Posterior vena cava (tissue), 2 donors: ENCODE measurements at regions of chr5 and their contacts with region 1.

Region 1: DNA sequence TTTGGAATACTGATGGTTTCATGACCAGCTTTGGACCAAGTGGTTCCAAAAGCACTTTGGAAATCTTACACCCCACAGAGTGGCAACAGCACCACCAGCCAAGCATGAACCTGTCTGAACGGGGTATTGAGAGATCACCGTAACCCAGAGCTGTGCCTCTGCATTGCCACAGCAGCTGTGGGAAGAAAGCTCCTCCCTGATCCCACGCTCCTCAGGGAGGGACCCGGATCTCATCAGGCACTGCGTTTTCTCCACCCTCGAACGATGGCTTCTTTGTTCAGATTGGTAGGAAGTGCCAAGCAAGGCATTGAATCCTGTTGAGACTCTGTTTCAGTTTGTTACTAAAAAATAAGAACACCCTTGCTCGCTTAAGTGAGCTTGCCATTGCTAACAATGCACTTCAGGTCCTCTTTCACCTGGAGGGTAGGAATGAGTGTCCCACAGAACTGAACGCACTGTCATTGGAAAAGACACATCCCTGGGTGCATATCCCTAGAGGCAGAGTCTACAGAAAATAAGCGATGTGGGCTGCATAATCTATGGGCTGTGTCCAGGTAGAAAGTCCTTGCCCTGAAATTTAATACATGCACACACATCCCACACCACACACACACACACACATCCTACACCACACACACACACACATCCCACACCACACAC is 118.0 kb upstream of the ICE1 start:
- DNase-seq: no peak

Region 2: DNA sequence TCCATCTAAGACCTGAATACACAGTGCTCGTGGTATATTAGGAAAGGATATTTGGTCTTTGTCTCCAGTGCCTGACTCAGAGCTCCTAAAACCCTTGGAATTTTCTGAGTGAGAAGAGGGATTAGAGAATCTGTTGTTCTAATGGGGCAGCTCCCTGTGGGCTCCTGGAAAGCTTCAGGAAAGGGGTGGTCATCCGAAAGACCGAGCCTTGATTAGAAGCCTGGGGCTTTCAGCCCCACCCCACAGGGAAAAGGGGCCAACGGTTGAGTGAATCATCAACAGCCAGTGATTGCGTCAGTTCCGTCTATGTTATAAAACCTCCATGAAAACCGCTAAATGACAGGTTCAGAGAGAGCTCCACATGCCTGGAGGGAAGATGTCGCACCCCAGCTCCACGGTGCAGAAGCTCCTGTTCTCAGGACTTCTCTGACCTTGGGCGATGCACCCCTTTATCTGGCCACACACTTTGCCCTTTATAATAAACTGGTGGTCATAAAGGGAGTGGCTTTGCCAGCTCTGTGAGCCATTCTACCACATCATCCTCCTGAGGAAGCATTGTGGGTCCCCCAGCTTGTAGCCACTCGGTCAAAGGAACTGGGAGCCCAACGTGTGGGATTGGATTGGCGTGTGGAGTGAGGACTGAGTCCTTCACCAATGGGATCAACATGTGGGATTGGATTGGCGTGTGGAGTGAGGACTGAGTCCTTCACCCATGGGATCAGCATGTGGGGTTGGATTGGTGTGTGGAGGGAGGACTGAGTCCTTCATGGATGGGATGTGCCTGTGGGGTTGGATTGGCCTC is 47.0 kb after region 1 on chr5:
- intact Hi-C with region 1: loop called in 1 of 2 experiments (anchors 1 kb)
- DNase-seq: no peak